ENCODE measurements at regions of chrX and their contacts with region 1.

Region 1: DNA sequence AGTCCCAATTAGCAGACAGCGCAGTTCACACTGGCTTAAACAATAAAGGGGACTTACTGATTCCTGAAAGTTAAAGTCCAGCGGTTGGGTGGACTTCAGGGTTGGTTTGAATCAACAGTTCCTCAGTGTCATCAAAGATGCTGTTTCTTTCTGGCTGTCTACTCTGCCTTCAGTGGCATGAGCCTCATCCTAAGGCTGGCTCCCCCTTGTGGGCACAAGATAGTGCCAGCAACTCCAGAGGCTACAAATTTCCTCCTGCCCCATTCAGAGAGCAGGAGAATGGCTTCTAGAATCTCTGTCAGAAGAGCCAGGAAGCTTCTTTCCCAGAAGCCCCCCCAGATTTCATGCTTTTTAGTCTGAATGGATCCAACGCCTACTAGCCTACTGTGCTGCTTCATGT is 82.4 kb upstream of the MTM1 start:
- DNase-seq: no peak

Region 2: DNA sequence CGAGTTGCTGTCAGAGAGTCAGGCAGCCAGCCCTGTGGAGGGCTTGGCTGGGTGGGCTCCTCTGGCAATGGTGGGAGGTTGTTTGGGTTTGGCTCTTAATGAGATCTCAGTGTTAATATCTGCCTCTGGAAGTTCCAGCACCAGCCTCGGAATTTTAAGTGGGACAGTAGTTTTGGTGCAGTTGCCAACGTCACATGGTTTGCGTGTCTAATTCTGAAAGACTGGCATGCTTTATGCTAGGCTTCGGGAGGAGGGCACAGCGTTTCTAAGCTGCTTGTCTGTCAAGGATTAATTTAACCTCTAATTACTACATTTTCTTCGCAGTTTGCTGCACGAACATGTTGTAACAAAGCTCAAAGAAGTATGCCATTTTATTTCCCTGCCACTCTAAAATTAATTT is 113.7 kb before region 1 on chrX:
- intact Hi-C with region 1: loop called (anchors 10 kb)
- DNase-seq: no peak

Region 3: DNA sequence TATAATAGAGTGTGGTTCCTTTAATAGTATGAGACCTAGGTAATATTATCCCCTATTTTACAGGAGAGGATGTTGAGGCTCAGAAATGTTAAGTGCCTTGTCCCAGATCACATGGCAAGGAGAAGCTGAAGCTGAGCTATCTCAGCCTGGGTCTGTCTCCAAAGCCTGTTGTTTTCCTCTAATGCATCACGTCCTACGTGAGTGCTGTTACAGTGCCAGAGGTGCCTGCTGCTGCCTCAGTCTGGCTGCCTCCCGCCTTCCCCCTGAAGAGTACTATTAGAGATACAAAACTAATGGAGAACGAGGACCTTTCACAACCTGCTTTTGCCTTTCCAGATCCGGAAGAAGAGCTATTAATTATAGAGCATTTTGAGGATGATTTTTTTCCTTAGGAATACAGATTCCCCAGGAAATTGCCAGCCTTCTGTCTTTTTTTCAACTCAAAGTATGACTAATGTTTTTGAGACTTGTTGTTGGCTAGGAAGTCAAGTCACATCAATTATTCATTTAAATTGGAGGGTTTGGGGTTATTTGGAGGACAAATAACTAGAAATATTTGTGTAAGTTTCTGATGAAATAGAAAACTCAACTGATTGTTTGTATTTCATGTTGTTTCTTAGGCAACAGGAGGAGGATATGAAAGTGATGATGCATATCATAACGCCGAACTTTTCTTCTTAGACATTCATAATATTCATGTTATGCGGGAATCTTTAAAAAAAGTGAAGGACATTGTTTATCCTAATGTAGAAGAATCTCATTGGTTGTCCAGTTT is 163.3 kb after region 1 on chrX:
- intact Hi-C with region 1: no loop called
- DNase-seq: no peak

Region 4: DNA sequence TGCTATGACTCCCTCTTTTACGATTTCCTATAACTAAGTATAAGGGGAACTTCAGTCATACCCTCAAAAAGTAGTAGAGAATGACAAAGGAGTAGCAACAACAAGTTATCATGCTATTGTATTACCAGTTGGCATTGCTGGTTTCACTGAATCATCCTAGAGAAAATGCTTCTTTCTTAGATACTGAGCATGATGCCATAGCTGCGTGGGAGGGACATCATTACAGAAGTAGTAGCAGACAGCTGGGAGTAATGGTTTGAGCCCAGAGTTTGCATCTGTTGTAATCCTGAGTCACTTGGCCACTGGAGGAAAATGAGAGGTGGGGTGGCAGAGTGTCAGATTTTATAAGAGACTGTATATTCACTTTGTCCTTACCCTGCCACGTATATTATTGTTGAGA is 245.8 kb after region 1 on chrX:
- intact Hi-C with region 1: no loop called
- DNase-seq: no peak